ENCODE measurements at regions of chr15 and their contacts with region 1.

Region 1: DNA sequence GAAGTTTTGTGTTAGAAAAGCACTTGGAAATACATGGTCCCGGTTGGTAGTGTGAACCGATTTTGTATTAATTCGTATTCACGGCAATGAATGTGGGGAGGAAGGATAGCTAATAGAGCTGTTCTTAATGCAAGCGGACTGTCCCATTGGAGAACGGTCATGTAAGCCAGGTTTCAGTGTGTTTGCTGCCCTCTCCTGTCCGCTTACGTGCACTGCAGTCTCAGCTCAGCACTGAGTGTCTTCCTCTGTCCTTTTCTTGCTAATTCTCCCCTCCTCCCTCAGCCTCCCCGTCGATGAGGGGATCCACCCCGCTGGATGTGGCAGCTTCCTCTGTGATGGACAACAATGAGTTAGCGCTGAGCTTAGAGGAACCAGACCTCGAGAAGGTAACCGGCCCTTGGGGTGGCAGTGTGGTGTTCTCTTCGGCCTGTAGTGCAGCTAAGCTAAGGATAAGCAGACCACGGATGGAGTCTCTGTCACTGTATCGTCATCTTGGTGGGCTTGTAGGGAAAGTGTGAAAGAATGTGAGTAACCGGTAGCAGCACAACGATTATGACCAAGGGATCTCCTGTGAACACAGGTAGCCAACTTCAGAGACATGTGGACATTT is 267.5 kb upstream of the CHRM5 start:
- DNase-seq: peak; percentile 75
- ATAC-seq: peak; percentile 96

Region 2: DNA sequence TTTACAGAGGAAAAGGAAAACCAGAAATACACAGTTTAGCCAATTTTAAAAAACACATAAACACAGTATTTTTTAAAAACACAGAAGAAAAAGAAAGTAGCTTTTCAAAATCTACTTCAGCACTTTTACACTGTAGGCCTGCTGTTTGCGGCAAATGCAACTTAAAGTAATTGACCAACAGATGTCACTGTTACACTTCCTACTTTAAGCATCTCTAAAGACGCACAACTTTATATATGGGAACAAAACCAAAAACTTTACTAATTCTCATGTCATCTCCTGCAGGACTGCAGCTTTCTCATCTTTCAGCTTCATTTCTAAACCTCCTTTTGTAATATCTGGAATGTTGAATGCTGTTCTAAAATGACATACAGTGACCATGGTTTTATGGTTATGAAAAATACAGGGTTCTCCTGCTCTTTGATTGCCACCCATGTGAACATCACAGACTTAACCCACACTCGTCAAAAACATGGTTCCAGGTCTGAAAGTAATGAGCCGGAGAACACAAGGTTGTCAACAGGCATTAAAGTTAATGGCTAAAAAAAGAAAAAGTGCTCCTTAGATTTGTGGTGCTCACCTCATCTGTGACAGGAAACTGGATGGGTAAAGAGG is 614.2 kb before region 1 on chr15:
- intact Hi-C with region 1: loop called (anchors 5 kb)
- DNase-seq: no peak
- ATAC-seq: peak; percentile 65

Region 3: GRCh38 chr15:33234014-33234461 is 466.8 kb before region 1 on chr15:
- intact Hi-C with region 1: loop called (anchors 10 kb)
- DNase-seq: no peak
- ATAC-seq: no peak

Region 4: GRCh38 chr15:33292717-33293307 is 408.0 kb before region 1 on chr15:
- intact Hi-C with region 1: loop called (anchors 10 kb)
- DNase-seq: no peak
- ATAC-seq: peak; percentile 82